ENCODE measurements at regions of chr17 and their contacts with region 1.

Region 1: GRCh38 chr17:21126645-21127510 is at the start of gene DHRS7B:
- DNase-seq: peak; percentile 97
- H3K4me3 ChIP-seq: peak within 1 kb of the TSS; percentile 65 to 98 (median 80)
- H3K27ac ChIP-seq: peak within 1 kb of the TSS; percentile 89 to 98 (median 96)
- H3K4me1 ChIP-seq: peaks cover 20 to 76% (median 54%) of the 10 kb centered on the region in 6 donors
- H3K27me3 ChIP-seq: no peaks in the 10 kb centered on the region
- CTCF ChIP-seq: peak in 2 of 11 experiments; percentile 7 to 17
- POLR2A ChIP-seq: peak in 1 of 3 donors; percentile 5
- total RNA-seq, gene DHRS7B: 13.3 to 31.3 (median 19.7) TPM

Region 2: DNA sequence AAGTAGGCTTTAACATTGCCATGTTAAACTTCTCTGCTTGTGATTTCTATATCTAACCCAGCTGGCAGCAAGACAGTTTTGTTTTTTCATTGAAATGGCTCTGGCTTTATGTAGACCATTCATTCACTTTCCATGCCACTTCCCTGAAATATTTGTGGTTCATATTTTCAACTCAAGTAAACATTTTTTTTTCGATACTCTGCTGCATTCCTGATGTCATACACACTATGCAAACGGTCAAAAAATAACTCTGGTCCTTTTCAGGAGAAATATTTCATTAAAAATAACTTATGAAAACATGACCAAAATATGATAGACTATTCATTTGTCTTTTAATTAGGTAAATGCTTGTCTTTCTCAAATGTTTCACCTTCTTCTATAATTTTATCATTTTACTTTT is 200.3 kb before region 1 on chr17:
- intact Hi-C with region 1: no loop called
- DNase-seq: no peak
- H3K4me3 ChIP-seq: no peak overlapping the region
- H3K27ac ChIP-seq: no peak overlapping the region
- H3K4me1 ChIP-seq: peaks cover 0 to 5% (median 0%) of the 10 kb centered on the region in 6 donors
- H3K27me3 ChIP-seq: no peaks in the 10 kb centered on the region
- CTCF ChIP-seq: no peak
- POLR2A ChIP-seq: no peak

Region 3: GRCh38 chr17:21284319-21285163 is 157.7 kb after region 1 on chr17 and contains the start of gene MAP2K3:
- intact Hi-C with region 1: loop called (anchors 10 kb)
- DNase-seq: peak; percentile 100
- H3K4me3 ChIP-seq: peak within 1 kb of the TSS; percentile 87 to 99 (median 96)
- H3K27ac ChIP-seq: peak within 1 kb of the TSS; percentile 87 to 98 (median 96)
- H3K4me1 ChIP-seq: peaks cover 37 to 95% (median 69%) of the 10 kb centered on the region in 6 donors
- H3K27me3 ChIP-seq: no peaks in the 10 kb centered on the region
- CTCF ChIP-seq: peak in 2 of 11 experiments; percentile 6 to 34
- POLR2A ChIP-seq: peak in 2 of 3 donors; percentile 80 to 94
- total RNA-seq, gene MAP2K3: 44.3 to 121 (median 83.6) TPM